Posterior vena cava (tissue), 2 donors: ENCODE measurements at regions of chr4 and their contacts with region 1.

Region 1: GRCh38 chr4:48109413-48110263 is 24.4 kb downstream of the TXK start:
- DNase-seq: no peak

Region 2: DNA sequence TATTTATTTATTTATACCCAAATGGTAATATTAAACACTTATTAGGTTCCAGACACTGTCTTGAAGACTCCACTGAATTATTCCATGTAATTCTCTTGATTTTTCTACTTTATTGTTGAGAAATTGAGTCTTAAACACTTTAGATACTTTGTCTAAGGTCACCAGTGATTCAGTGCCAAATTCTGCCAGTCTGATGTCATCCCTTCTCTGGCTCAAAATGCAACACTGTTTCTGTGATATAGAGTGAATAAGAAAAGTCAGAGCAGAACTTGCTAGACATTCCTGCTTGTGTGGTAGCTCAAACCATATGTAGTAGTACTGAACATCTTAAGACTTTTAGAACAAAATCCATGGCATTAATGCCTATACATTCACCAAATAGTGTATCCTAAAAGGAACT is 913.9 kb before region 1 on chr4:
- intact Hi-C with region 1: loop called in 1 of 2 experiments (anchors 10 kb)
- DNase-seq: no peak